Transverse colon (tissue), 4 donors: ENCODE measurements at regions of chr6 and their contacts with region 1.

Region 1: DNA sequence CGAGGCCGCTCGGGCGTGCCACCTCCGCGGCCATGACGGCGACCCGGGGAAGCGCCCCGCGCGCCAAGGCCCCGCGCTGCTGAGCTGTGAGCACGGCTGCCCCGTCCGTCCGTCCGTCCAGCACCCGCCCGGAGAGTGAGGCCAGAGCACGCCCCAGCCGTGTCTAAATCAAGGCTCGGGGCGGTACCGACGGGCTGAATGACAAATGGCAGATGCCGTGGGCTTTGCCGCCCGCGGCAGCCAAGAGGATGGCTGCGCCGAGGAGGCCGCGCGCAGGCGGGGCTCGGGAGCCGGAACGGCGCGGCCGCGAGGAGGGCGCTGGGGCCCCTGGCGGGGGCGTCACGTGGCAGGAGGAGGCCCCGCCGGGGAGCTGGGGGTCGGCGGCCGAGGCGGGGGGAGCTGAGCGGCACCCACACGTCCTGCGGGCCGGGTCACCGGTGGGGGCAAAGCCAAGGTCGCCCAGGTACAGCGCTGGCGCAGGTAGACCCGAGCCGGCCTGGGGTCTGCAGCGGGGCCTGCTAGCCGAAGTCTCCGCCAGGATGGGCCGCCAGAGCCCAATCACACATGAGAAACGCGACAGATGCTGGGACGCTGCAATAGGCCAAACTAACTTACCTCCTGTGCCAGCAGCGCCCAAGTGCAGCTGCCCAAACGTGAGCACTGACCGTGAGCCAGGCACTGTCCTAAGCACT is at the start of gene PLAGL1:
- DNase-seq: peak; percentile 69
- H3K4me3 ChIP-seq: peak within 1 kb of the TSS; percentile 37 to 69 (median 63)
- H3K27ac ChIP-seq: peak within 1 kb of the TSS; percentile 77 to 87 (median 84)
- H3K4me1 ChIP-seq: peaks cover 0 to 18% (median 6%) of the 10 kb centered on the region in 4 donors
- H3K27me3 ChIP-seq: no peaks in the 10 kb centered on the region
- CTCF ChIP-seq: no peak
- EP300 ChIP-seq: no peak
- POLR2A ChIP-seq: peak; percentile 73
- total RNA-seq, gene PLAGL1: 45.3 to 133 (median 50.4) TPM

Region 2: GRCh38 chr6:143940011-143940597 is 68.2 kb before region 1 on chr6:
- in situ Hi-C with region 1: loop called in 3 of 4 experiments (anchors 10 kb)
- intact Hi-C with region 1: loop called (anchors 10 kb)
- DNase-seq: peak; percentile 62
- H3K4me3 ChIP-seq: no peak overlapping the region
- H3K27ac ChIP-seq: no peak overlapping the region
- H3K4me1 ChIP-seq: peaks cover 0 to 9% (median 0%) of the 10 kb centered on the region in 4 donors
- H3K27me3 ChIP-seq: no peaks in the 10 kb centered on the region
- CTCF ChIP-seq: peak; percentile 58 to 91 (median 81)
- EP300 ChIP-seq: no peak
- POLR2A ChIP-seq: no peak